Calu3 (cell line): ENCODE measurements at regions of chr7 and their contacts with region 1.

Region 1: DNA sequence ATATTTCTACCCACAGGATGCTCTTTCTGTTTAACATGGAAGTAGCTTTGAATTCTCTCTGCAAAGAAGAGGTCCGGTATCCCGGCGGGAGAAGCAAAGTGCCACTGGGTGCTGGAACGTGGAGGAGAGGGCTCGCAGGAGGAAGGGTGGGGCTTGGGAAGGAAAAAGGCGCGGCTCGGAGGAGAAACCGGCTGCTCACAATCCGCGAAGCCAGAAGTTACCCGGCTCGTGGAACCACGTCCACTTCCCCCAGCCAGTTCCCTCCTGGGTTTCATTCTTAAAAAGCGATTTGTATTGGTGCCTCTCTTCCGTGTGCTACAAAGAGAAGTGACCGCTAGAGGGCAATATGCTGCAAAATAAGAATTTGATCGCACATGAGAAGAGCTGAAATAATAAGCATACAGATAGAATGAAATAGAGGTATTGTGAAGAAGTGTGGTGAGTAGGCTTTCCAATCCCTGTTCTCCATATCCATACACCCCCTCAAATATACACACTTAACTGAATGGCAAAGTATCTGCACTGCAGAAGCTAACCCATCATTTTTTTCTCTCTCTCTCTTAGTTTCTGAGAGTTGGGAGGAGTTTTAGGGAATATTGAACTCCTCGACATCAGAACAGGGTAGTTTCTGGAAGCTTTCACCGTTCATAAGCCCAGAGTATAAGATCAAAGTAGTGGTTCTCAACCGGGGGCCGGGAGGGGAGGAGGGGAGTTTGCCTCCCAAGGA is 31.1 kb downstream of the TRIL start:
- DNase-seq: peak; percentile 71
- H3K4me3 Mint-ChIP-seq: peak overlapping the region; percentile 78
- H3K27ac Mint-ChIP-seq: peak overlapping the region; percentile 7
- H3K4me1 Mint-ChIP-seq: peaks cover 27% of the 10 kb centered on the region
- H3K27me3 Mint-ChIP-seq: no peaks in the 10 kb centered on the region
- CTCF ChIP-seq: peak; percentile 81

Region 2: GRCh38 chr7:28955718-28956619 is 28.9 kb after region 1 on chr7:
- CTCF ChIA-PET with region 1: interaction called, 65 read pairs
- intact Hi-C with region 1: loop called (anchors 1 kb)
- DNase-seq: peak; percentile 93
- H3K4me3 Mint-ChIP-seq: peak overlapping the region; percentile 93
- H3K27ac Mint-ChIP-seq: peak overlapping the region; percentile 35
- H3K4me1 Mint-ChIP-seq: peaks cover 14% of the 10 kb centered on the region
- H3K27me3 Mint-ChIP-seq: no peaks in the 10 kb centered on the region
- CTCF ChIP-seq: peak; percentile 91

Region 3: GRCh38 chr7:29113384-29114103 is 186.5 kb after region 1 on chr7:
- CTCF ChIA-PET with region 1: interaction called, 21 read pairs
- intact Hi-C with region 1: no loop called
- DNase-seq: peak; percentile 72
- H3K4me3 Mint-ChIP-seq: peak overlapping the region; percentile 60
- H3K27ac Mint-ChIP-seq: peak overlapping the region; percentile 72
- H3K4me1 Mint-ChIP-seq: peaks cover 59% of the 10 kb centered on the region
- H3K27me3 Mint-ChIP-seq: no peaks in the 10 kb centered on the region
- CTCF ChIP-seq: peak; percentile 50

Region 4: DNA sequence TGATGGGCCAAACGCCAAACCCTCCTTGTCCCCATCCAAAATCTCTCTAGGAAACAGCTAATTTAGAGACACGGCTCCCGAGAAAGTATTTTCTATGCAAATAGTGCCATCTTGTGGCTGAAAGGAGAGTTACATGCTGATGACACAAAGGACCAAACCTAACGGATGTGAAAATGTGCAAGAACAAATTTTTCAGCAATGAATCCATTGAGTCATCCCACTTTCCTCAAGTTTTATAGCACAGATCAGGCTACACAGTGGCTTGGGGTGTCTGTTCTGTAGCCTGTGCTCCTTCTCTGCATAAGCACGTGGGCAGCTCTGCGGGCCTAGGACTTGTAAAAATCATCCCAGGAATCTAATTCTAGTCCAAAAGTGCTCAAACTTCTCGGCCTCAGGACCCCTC is 481.8 kb after region 1 on chr7:
- CTCF ChIA-PET with region 1: interaction called, 37 read pairs
- intact Hi-C with region 1: loop called (anchors 1 kb)
- DNase-seq: peak; percentile 79
- H3K4me3 Mint-ChIP-seq: no peak overlapping the region
- H3K27ac Mint-ChIP-seq: no peak overlapping the region
- H3K4me1 Mint-ChIP-seq: peaks cover 13% of the 10 kb centered on the region
- H3K27me3 Mint-ChIP-seq: no peaks in the 10 kb centered on the region
- CTCF ChIP-seq: peak; percentile 89

Region 5: DNA sequence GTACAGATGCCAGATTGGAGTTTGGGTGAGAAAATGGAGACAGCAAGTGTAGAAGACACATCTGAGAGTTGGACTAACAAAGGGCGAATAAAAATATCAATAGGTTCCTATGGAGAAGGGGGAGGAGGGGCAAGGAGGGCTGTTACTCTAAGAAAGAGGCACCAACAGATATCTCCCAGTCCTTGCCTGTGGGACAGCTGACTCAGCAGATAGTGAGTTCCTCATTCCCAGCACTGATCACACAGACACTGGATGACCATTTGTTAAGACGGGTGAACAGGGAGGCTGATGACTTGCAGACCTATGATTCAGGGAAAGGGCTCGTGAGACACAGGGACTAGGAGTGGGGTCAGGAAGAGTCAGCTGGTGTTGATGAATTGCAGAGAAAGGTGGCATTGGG is 630.9 kb after region 1 on chr7:
- CTCF ChIA-PET with region 1: no interaction called
- intact Hi-C with region 1: no loop called
- DNase-seq: no peak
- H3K4me3 Mint-ChIP-seq: no peak overlapping the region
- H3K27ac Mint-ChIP-seq: no peak overlapping the region
- H3K4me1 Mint-ChIP-seq: no peaks in the 10 kb centered on the region
- H3K27me3 Mint-ChIP-seq: no peaks in the 10 kb centered on the region
- CTCF ChIP-seq: no peak